HAP-1 (cell line): ENCODE measurements at regions of chr20 and their contacts with region 1.

Region 1: DNA sequence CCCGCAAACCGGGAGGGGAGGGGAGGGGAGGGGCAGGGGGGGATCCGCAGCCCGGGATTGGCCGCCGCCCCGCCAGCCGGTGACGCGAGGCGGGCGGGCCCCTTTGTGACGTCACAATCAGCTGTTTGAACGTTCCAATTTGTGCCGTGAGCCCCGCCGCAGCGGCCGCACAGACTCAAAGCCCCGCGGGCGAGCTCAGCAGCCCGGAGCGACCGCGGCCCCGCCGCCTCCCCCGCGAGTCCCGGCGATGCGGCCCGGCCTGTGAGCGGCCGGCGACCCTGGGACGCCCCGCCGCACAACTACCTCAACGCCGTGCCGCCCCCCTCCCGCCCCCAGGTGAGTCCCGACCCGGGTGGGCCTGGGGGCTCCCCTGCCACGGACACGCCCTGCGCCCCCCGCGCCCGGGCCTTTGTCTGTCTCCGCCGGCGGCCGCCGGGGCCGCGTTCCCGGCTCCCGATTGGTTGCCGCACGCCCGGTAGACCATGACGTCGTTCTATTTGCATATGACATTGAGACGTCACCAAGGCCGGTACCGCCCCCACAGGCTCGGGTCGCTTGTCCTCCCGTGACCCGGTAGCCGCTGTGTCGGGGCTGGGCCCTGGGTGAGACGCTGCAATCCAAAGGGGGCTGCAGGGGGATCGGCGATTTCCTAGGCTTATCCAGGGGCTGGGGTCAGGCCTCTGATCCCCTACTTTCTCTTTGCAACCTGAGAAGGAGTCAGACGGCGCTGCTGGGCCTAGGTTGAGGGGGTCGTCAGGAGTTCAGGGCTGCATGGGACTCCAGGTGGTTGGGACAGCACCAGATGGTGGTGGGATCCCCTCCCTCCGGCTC is at the start of gene TP53INP2:
- DNase-seq: peak; percentile 87 to 96
- H3K4me3 ChIP-seq: peak within 1 kb of the TSS; percentile 73
- H3K4me1 ChIP-seq: peaks cover 15% of the 10 kb centered on the region
- H3K27me3 ChIP-seq: no peaks in the 10 kb centered on the region

Region 2: DNA sequence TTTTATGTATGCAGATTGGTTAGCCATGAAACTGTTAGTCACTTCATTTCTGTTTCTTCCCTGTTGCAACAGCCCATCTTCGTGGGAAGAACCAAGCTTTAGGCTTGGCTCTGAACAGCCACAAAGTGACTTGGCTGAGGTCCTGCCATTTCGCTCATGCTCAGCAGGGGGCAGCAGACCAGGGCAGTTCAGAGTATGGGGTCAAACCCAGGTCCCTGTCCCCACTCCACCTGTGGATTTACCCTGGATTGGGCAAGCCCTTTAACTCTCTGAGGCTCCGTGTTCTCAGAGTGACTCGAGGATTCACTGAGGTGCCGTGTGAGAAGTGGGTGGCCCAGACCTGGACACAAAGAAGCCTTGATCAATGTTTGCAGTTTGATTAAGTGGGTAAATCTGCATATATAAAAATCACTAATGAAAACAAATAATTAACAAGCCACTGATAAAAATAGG is 165.7 kb before region 1 on chr20:
- in situ Hi-C with region 1: loop called (anchors 5 kb)
- DNase-seq: peak; percentile 37 to 71
- H3K4me3 ChIP-seq: no peak overlapping the region
- H3K4me1 ChIP-seq: no peaks in the 10 kb centered on the region
- H3K27me3 ChIP-seq: no peaks in the 10 kb centered on the region